CD8-positive, alpha-beta T cell (primary cell): ENCODE measurements at regions of chr16 and their contacts with region 1.

Region 1: DNA sequence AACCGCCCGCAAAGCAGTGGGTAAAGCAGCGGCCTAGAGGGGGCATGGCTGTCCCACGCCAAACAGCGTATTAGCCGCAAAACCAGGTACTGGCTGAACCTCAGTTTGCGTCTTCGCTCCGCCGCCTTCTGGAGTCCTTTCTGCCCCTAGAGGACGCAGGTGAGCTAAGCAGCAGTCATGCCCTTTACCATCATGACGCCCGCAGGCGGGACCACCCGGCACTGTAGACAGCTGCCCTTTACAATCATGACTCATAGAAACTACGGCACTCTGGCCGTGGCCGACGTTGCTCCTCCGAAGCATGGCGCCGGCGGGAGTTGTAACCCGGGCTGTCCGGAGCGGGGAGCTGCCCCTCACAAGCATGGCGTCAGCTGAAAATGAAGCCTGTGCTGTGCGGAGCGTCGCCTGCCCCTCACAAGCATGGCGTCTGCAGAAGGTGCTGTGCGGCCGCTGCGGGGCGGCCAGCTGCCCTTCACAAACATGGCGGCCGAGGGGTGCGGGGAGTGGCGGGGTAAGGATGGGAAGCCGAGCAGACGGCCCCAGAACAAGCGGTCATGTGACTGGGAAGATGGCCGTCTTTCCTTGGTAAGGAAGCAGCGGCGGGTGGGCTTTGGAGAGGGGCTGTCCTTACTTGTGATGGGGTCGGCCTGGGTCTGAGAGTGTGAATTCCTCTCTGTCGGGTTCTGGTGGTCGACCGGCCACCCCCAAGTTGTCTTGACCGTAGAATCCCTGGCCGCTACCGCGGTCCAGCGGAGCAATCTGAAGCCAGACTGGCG is at the start of gene VPS35L:
- DNase-seq: peak; percentile 91 to 99 (median 97)
- ATAC-seq: peak; percentile 95
- H3K4me3 ChIP-seq: peak within 1 kb of the TSS; percentile 67 to 73
- H3K4me3 Mint-ChIP-seq: peak within 1 kb of the TSS; percentile 97
- H3K27ac ChIP-seq: peak within 1 kb of the TSS; percentile 66 to 81
- H3K27ac Mint-ChIP-seq: peak within 1 kb of the TSS; percentile 96
- H3K4me1 ChIP-seq: peaks cover 10% of the 10 kb centered on the region
- H3K4me1 Mint-ChIP-seq: peaks cover 28% of the 10 kb centered on the region
- H3K27me3 ChIP-seq: no peaks in the 10 kb centered on the region
- H3K27me3 Mint-ChIP-seq: no peaks in the 10 kb centered on the region
- CTCF ChIP-seq: peak; percentile 79
- total RNA-seq, gene VPS35L: 26.5 to 27.3 TPM

Region 2: GRCh38 chr16:18789850-18790724 is 765.3 kb before region 1 on chr16 and contains the start of gene RPS15A:
- CTCF ChIA-PET with region 1: no interaction called
- POLR2A ChIA-PET with region 1: interaction called, 12 read pairs
- intact Hi-C with region 1: loop called (anchors 1 to 2 kb)
- DNase-seq: peak; percentile 81 to 99 (median 91)
- ATAC-seq: peak; percentile 96
- H3K4me3 ChIP-seq: peak within 1 kb of the TSS; percentile 98 to 100
- H3K4me3 Mint-ChIP-seq: peak within 1 kb of the TSS; percentile 95
- H3K27ac ChIP-seq: peak within 1 kb of the TSS; percentile 76 to 88
- H3K27ac Mint-ChIP-seq: peak within 1 kb of the TSS; percentile 88
- H3K4me1 ChIP-seq: peaks cover 39% of the 10 kb centered on the region
- H3K4me1 Mint-ChIP-seq: peaks cover 50% of the 10 kb centered on the region
- H3K27me3 ChIP-seq: no peaks in the 10 kb centered on the region
- H3K27me3 Mint-ChIP-seq: no peaks in the 10 kb centered on the region
- CTCF ChIP-seq: no peak
- total RNA-seq, gene RPS15A: 3,671 to 3,755 TPM

Region 3: DNA sequence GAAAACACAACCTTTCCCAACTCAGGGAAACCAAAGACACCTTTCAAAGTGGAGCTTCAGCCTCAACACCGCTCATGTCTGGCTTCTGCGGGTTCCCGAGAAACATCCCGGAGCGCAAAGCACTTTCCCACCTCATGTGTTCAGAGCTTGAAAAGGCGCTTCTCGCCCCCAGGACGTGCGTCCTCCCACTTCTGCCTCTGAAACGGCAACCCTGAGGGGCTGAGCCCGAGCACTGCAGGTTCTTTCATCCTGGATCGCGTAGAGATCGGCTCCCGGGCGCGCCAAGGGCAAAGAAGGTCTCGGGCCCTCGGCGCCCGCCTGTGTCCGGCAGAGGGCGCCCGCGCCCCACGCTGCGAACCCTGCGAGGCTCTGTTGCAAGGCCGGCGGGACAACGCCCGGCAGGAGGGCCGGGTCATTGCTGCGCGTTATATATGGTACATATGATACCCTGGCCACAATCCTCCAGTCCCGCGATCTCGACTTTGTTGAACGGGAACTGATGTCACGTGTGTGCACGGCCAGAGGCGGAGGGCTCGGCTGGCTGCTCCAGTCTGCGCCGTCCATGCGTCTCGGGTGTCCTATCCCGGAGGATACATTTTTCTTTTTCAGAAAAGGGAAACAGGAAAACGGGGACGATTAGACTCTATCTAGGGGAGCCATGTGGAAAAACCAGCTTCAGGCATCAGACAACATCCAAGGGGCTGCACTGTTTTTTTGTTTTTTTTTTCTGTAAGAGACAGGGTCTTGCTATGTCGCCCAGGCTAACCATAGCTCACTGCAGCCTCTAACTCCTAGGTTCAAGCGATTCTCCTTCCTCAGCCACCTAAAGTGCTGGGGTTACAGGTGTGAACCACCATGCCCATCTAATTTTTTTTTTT is 468.8 kb before region 1 on chr16:
- CTCF ChIA-PET with region 1: interaction called, 3 read pairs
- POLR2A ChIA-PET with region 1: no interaction called
- intact Hi-C with region 1: loop called in 1 of 2 experiments (anchors 5 kb)
- DNase-seq: peak; percentile 53 to 87 (median 72)
- ATAC-seq: peak; percentile 91
- H3K4me3 ChIP-seq: peak overlapping the region; percentile 25 to 40
- H3K4me3 Mint-ChIP-seq: peak overlapping the region; percentile 63
- H3K27ac ChIP-seq: no peak overlapping the region
- H3K27ac Mint-ChIP-seq: no peak overlapping the region
- H3K4me1 ChIP-seq: peaks cover 3% of the 10 kb centered on the region
- H3K4me1 Mint-ChIP-seq: peaks cover 3% of the 10 kb centered on the region
- H3K27me3 ChIP-seq: peaks cover 0 to 4% of the 10 kb centered on the region in 2 experiments
- H3K27me3 Mint-ChIP-seq: peaks cover 2% of the 10 kb centered on the region
- CTCF ChIP-seq: peak; percentile 98

Region 4: GRCh38 chr16:19583665-19584300 is 28.4 kb after region 1 on chr16:
- CTCF ChIA-PET with region 1: interaction called, 5 read pairs
- POLR2A ChIA-PET with region 1: no interaction called
- intact Hi-C with region 1: loop called in 1 of 2 experiments (anchors 2 kb)
- DNase-seq: peak in 4 of 9 experiments; percentile 8 to 61 (median 32)
- ATAC-seq: peak; percentile 75
- H3K4me3 ChIP-seq: no peak overlapping the region
- H3K4me3 Mint-ChIP-seq: no peak overlapping the region
- H3K27ac ChIP-seq: no peak overlapping the region
- H3K27ac Mint-ChIP-seq: no peak overlapping the region
- H3K4me1 ChIP-seq: no peaks in the 10 kb centered on the region
- H3K4me1 Mint-ChIP-seq: no peaks in the 10 kb centered on the region
- H3K27me3 ChIP-seq: no peaks in the 10 kb centered on the region
- H3K27me3 Mint-ChIP-seq: no peaks in the 10 kb centered on the region
- CTCF ChIP-seq: peak; percentile 63

Region 5: DNA sequence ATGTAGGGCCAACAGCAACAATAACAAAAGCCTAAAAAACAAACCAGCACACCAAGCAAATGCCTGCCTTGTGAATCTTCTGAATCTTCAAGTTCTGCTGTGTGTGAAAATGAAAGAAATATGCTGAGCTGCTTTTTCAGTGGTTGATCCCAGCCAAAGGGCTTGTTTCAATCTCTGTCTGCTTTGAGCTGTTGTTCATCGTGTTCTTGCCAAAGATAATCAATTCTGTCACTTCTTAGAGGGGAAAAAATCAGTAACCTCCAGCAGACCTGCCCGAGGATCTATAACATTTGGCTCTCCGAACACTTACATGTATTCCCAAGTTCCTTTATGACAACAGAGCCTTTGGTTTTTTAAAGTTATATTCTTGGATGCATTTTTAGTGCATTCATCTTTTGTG is 66.1 kb after region 1 on chr16:
- CTCF ChIA-PET with region 1: no interaction called
- POLR2A ChIA-PET with region 1: no interaction called
- intact Hi-C with region 1: no loop called
- DNase-seq: no peak
- ATAC-seq: no peak
- H3K4me3 ChIP-seq: no peak overlapping the region
- H3K4me3 Mint-ChIP-seq: no peak overlapping the region
- H3K27ac ChIP-seq: no peak overlapping the region
- H3K27ac Mint-ChIP-seq: no peak overlapping the region
- H3K4me1 ChIP-seq: no peaks in the 10 kb centered on the region
- H3K4me1 Mint-ChIP-seq: no peaks in the 10 kb centered on the region
- H3K27me3 ChIP-seq: no peaks in the 10 kb centered on the region
- H3K27me3 Mint-ChIP-seq: no peaks in the 10 kb centered on the region
- CTCF ChIP-seq: no peak

Region 6: DNA sequence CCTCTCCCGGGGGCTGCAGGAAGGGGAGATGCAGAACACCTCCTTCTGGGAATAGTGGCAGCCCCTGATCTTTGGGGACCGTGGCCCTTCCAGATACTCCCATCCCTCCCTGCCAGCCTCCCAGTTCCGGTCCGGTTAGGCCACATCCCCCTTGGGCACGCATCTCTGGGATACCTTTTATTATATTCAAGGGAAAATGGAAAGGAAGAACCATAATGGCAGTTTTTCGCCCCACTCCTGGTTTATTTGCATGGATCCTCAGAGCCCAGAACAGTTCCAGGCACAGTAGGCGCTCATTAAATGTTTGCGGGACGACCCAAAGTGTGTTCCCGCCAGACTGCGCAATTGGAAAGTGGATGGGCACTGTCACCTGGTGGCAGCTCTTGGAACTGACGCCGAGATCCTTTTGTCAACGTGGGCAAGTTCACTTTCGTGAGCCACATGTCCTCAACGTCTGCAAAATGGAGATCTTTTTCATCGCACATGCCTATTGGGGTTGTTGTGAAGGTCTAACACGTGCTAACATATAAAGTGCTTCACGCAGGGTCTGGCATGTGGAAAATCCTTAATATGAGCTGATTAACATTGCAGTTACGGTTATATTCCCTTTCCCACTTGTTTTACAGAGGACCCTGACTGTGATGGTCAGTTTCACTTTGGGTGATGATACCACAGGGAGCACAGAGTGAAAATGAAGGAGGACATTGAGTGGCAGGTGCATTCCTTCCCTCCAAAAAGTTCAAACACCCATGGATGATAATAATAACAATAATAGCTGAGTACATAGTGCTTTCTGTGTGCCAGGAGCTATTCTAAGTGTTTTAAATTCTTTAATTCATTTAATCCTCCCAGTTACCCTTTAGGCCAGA is 331.0 kb after region 1 on chr16:
- CTCF ChIA-PET with region 1: interaction called, 61 read pairs
- POLR2A ChIA-PET with region 1: interaction called, 8 read pairs
- intact Hi-C with region 1: loop called (anchors 1 kb)
- DNase-seq: peak; percentile 64 to 85 (median 79)
- ATAC-seq: peak; percentile 65
- H3K4me3 ChIP-seq: peak overlapping the region in 1 of 2 experiments; percentile 72
- H3K4me3 Mint-ChIP-seq: peak overlapping the region; percentile 84
- H3K27ac ChIP-seq: no peak overlapping the region
- H3K27ac Mint-ChIP-seq: no peak overlapping the region
- H3K4me1 ChIP-seq: peaks cover 31% of the 10 kb centered on the region
- H3K4me1 Mint-ChIP-seq: peaks cover 24% of the 10 kb centered on the region
- H3K27me3 ChIP-seq: peaks cover 17 to 29% of the 10 kb centered on the region in 2 experiments
- H3K27me3 Mint-ChIP-seq: peaks cover 36% of the 10 kb centered on the region
- CTCF ChIP-seq: peak; percentile 97